Left colon (tissue), 2 donors: ENCODE measurements at regions of chr21 and their contacts with region 1.

Region 1: DNA sequence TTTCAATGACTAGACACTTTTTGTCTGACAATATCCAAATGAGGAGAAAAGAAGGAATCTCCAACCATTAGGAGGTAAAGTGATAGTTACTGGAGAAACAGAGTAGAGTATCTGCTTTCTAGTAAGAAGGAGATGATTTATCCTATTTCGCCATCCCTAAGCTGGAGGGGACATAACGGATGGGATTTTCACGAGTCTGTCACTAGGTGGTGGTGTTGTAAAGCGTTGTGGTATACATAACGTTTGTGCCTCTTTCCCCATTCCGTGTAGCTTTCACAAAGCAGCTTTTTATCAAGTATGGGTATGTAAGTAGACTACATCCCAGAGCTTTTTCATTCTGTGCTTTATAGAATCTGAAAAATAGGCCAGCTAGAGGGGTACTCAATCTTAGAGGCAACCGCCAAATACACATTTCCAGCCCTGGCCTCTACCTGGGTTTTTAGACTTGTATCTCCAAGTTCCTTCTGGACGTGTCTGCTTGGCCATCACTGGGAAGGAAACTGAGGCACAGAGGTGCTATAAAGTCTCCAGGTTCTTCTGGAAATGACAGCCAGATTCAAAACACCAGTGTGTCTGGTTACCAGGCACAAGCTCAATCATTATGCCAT is 33.3 kb upstream of the FAM3B start:
- DNase-seq: peak in 1 of 2 donors; percentile 23
- ATAC-seq: peak; percentile 96

Region 2: GRCh38 chr21:41359289-41359688 is 76.0 kb after region 1 on chr21:
- intact Hi-C with region 1: loop called in 1 of 2 experiments (anchors 10 kb)
- DNase-seq: no peak
- ATAC-seq: no peak

Region 3: GRCh38 chr21:41459884-41460534 is 176.7 kb after region 1 on chr21:
- intact Hi-C with region 1: loop called in 1 of 2 experiments (anchors 5 kb)
- DNase-seq: no peak
- ATAC-seq: peak; percentile 0

Region 4: DNA sequence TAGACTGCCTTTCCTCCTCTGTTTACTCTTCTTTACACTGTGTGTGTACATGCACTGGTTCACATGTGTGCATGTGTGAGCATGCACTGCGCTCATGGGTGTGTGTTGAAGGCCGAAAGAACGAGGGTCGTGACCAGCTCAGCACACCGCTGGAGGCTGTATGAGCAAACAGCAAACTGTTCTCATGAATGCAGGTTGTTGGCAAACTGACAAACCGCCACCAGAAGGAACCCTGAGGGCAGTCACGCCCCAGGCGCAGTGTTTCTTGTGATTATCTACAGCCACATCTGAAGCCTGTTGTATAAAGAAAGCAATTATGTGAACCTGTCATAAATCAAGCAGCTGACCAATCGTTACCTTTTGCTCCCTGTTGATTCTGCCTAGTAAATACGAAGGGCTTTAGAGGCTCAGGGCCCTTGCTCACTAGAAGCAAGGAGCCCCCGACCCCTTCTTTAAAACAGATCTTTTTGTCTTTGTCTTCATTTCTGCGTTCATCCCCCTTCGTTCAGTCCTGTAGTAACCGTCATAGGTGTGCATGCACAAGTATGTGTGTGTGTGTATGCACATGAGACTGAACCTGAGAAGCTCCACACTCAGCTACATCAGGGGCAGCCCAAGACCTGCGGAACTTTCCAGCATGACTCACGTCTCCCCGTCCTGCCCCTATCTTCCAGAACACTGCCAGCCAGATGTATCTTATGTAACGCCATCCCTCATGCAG is 500.3 kb after region 1 on chr21:
- intact Hi-C with region 1: loop called in 1 of 2 experiments (anchors 10 kb)
- DNase-seq: peak; percentile 88 to 89
- ATAC-seq: peak; percentile 76